ENCODE measurements at regions of chr3 and their contacts with region 1.

Region 1: DNA sequence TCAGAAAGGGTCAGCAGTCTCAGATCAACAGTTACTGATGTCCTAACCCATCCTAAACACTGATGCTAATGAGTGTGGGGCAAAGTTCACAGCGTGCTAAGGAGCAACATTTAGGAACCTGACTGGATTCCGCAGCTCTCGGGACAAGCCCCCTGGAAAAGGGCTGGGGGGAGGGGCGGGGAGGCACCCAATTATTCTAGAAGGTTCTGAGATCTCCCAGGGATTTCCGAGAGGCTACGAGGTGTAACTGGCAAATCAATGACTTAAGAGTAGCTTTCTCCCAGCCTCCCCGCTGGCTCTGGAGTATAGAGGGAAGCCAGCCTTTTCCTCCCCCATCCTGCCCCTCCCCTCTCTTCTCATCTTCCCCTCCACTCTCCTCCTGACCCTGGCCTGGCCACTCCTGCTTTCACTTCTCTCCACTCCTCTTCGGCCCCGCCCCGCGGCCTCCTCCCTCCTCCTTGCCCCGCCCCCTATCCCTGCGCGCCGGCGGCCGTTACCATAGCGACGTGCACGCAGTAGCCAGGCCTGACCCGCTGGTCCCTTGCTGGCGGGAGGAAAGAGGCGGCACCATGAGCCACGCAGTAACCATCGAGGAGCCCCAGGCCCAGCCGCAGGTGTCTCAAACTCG is at the start of gene CFAP91:
- DNase-seq: peak; percentile 93 to 99
- H3K4me3 ChIP-seq: peak within 1 kb of the TSS; percentile 54 to 73
- H3K27ac ChIP-seq: peak within 1 kb of the TSS; percentile 65
- H3K4me1 ChIP-seq: peaks cover 0 to 5% of the 10 kb centered on the region in 2 donors
- H3K27me3 ChIP-seq: no peaks in the 10 kb centered on the region
- CTCF ChIP-seq: no peak
- total RNA-seq, gene CFAP91: 3.5 TPM

Region 2: GRCh38 chr3:119498186-119498987 is 204.3 kb before region 1 on chr3 and contains the start of gene TIMMDC1:
- intact Hi-C with region 1: loop called (anchors 1 kb)
- DNase-seq: peak; percentile 90 to 98
- H3K4me3 ChIP-seq: peak within 1 kb of the TSS; percentile 78 to 92
- H3K27ac ChIP-seq: peak within 1 kb of the TSS; percentile 93 to 94
- H3K4me1 ChIP-seq: peaks cover 5 to 24% of the 10 kb centered on the region in 2 donors
- H3K27me3 ChIP-seq: no peaks in the 10 kb centered on the region
- CTCF ChIP-seq: no peak
- total RNA-seq, gene TIMMDC1: 31.1 TPM

Region 3: GRCh38 chr3:120021523-120021922 is 318.9 kb after region 1 on chr3:
- intact Hi-C with region 1: no loop called
- DNase-seq: no peak
- H3K4me3 ChIP-seq: no peak overlapping the region
- H3K27ac ChIP-seq: no peak overlapping the region
- H3K4me1 ChIP-seq: peaks cover 0 to 7% of the 10 kb centered on the region in 2 donors
- H3K27me3 ChIP-seq: no peaks in the 10 kb centered on the region
- CTCF ChIP-seq: no peak

Region 4: GRCh38 chr3:120596116-120596852 is 893.6 kb after region 1 on chr3 and contains the start of gene NDUFB4:
- intact Hi-C with region 1: loop called (anchors 10 kb)
- DNase-seq: peak; percentile 87 to 98
- H3K4me3 ChIP-seq: peak within 1 kb of the TSS; percentile 68 to 87
- H3K27ac ChIP-seq: peak within 1 kb of the TSS; percentile 73 to 86
- H3K4me1 ChIP-seq: peaks cover 6 to 28% of the 10 kb centered on the region in 2 donors
- H3K27me3 ChIP-seq: no peaks in the 10 kb centered on the region
- CTCF ChIP-seq: no peak
- total RNA-seq, gene NDUFB4: 37.0 TPM